HepG2 (cell line): ENCODE measurements at regions of chr17 and their contacts with region 1.

Region 1: GRCh38 chr17:64661976-64662773 is at the start of gene SMURF2:
- DNase-seq: peak; percentile 56
- ATAC-seq: peak; percentile 79
- H3K4me3 ChIP-seq: peak within 1 kb of the TSS; percentile 87 to 94 (median 90)
- H3K27ac ChIP-seq: peak within 1 kb of the TSS; percentile 70
- H3K4me1 ChIP-seq: peaks cover 49% of the 10 kb centered on the region
- H3K27me3 ChIP-seq: no peaks in the 10 kb centered on the region
- CTCF ChIP-seq: no peak
- EP300 ChIP-seq: no peak
- POLR2A ChIP-seq: peak; percentile 82 to 91
- RAD21 ChIP-seq: peak; percentile 32
- total RNA-seq, gene SMURF2: 24.3 and 29.3 TPM in 2 replicates

Region 2: GRCh38 chr17:64615028-64615677 is 47.0 kb before region 1 on chr17:
- CTCF ChIA-PET with region 1: no interaction called
- POLR2A ChIA-PET with region 1: no interaction called
- in situ Hi-C with region 1: no loop called
- intact Hi-C with region 1: no loop called
- DNase-seq: no peak
- ATAC-seq: no peak
- H3K4me3 ChIP-seq: no peak overlapping the region
- H3K27ac ChIP-seq: no peak overlapping the region
- H3K4me1 ChIP-seq: peaks cover 16% of the 10 kb centered on the region
- H3K27me3 ChIP-seq: no peaks in the 10 kb centered on the region
- CTCF ChIP-seq: no peak
- EP300 ChIP-seq: no peak
- POLR2A ChIP-seq: no peak
- RAD21 ChIP-seq: no peak

Region 3: DNA sequence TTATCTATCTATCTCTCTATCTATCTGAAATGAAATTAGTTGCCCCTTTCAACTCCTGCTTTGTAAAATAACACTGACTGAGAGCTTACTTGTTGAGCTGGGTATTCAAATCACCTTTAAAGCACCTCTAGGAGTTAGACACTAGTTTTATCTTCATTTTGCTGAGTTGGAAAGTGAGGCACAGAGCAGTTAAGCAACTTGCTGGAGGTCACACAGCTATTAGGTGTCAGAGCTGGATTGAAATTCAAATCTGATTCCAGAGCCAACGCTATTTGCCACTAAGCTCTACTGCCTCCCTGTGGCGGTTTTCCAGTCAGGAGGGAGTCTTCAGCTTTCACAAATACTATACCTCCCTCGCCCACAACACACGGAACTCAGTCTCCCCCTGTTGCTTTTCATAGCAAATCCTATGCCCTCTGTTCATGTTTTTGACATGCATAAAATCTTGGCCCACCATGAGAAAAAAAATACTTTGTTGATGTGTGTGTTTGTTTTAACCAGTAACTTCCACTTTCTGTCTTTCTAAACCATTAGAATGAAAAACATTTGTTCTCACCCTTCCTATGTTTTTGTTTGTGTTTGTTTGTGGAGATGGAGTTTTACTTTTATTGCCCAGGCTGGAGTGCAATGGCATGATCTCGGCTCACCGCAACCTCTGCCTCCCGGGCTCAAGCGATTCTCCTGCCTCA is 74.8 kb after region 1 on chr17:
- CTCF ChIA-PET with region 1: no interaction called
- POLR2A ChIA-PET with region 1: interaction called, 3 read pairs
- in situ Hi-C with region 1: no loop called
- intact Hi-C with region 1: loop called (anchors 5 kb)
- DNase-seq: peak; percentile 51
- ATAC-seq: peak; percentile 57
- H3K4me3 ChIP-seq: no peak overlapping the region
- H3K27ac ChIP-seq: no peak overlapping the region
- H3K4me1 ChIP-seq: peaks cover 45% of the 10 kb centered on the region
- H3K27me3 ChIP-seq: no peaks in the 10 kb centered on the region
- CTCF ChIP-seq: peak; percentile 58
- EP300 ChIP-seq: no peak
- POLR2A ChIP-seq: no peak
- RAD21 ChIP-seq: peak; percentile 78